RWPE1 (cell line): ENCODE measurements at regions of chr11 and their contacts with region 1.

Region 1: GRCh38 chr11:86288776-86289507 is 13.1 kb upstream of the HIKESHI start:
- DNase-seq: no peak
- H3K27ac ChIP-seq: no peak overlapping the region
- CTCF ChIP-seq: no peak

Region 2: GRCh38 chr11:86256608-86257007 is 32.3 kb before region 1 on chr11:
- CTCF ChIA-PET with region 1: no interaction called
- POLR2A ChIA-PET with region 1: interaction called, 11 read pairs
- DNase-seq: no peak
- H3K27ac ChIP-seq: no peak overlapping the region
- CTCF ChIP-seq: no peak